ENCODE measurements at regions of chr10 and their contacts with region 1.

Region 1: GRCh38 chr10:14904316-14904732 is 25.7 kb downstream of the SUV39H2 start:
- DNase-seq: peak; percentile 42
- ATAC-seq: no peak; the same call in 1 of the 2 replicates
- H3K4me3 ChIP-seq: no peak overlapping the region
- H3K27ac ChIP-seq: no peak overlapping the region
- H3K4me1 ChIP-seq: no peaks in the 10 kb centered on the region
- H3K27me3 ChIP-seq: no peaks in the 10 kb centered on the region
- CTCF ChIP-seq: peak; percentile 50

Region 2: GRCh38 chr10:14837757-14838581 is 66.4 kb before region 1 on chr10 and contains the starts of genes CDNF, HSPA14 and MSANTD7:
- CTCF ChIA-PET with region 1: no interaction called
- POLR2A ChIA-PET with region 1: interaction called, 35 read pairs
- intact Hi-C with region 1: no loop called
- DNase-seq: peak; percentile 96
- ATAC-seq: peak; percentile 94
- H3K4me3 ChIP-seq: peak within 1 kb of the TSS; percentile 88
- H3K27ac ChIP-seq: peak within 1 kb of the TSS; percentile 35
- H3K4me1 ChIP-seq: peaks cover 6% of the 10 kb centered on the region; the same call in 1 of the 2 replicates
- H3K27me3 ChIP-seq: no peaks in the 10 kb centered on the region
- CTCF ChIP-seq: no peak
- total RNA-seq, gene CDNF: 1.2 TPM in 1 of 2 replicates, not detected in the other
- total RNA-seq, gene HSPA14: 17.5 and 18.1 TPM in 2 replicates
- total RNA-seq, gene MSANTD7: 8.2 and 10.7 TPM in 2 replicates

Region 3: DNA sequence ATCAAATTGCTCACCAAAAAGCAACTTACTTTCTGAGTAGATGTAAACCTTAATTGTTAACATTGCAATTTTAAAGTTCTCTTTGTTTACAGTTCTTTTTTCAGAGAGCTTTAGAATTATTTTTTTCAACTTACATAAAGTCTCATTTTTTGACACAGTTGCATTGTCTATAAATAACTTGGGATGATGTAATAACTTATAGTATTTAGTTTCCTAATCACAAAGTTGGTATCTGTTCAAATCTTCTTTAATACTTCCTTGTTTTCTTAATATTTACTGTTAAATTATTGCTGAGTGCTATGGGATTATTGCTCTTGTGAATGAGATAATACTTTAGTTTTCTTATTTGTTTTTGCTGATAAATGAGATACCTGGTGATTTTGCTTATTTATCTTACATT is 44.5 kb before region 1 on chr10:
- CTCF ChIA-PET with region 1: no interaction called
- POLR2A ChIA-PET with region 1: no interaction called
- intact Hi-C with region 1: no loop called
- DNase-seq: no peak
- ATAC-seq: no peak
- H3K4me3 ChIP-seq: no peak overlapping the region
- H3K27ac ChIP-seq: no peak overlapping the region
- H3K4me1 ChIP-seq: no peaks in the 10 kb centered on the region
- H3K27me3 ChIP-seq: no peaks in the 10 kb centered on the region
- CTCF ChIP-seq: no peak

Measured in PC-3 (cell line).